GM12878 (cell line): ENCODE measurements at regions of chrX and their contacts with region 1.

Region 1: GRCh38 chrX:46642145-46642544 is 68.6 kb downstream of the CHST7 start:
- DNase-seq: no peak
- ATAC-seq: peak; percentile 69
- H3K4me3 ChIP-seq: no peak overlapping the region
- H3K27ac ChIP-seq: no peak overlapping the region
- H3K4me1 ChIP-seq: peaks cover 9% of the 10 kb centered on the region
- H3K27me3 ChIP-seq: no peaks in the 10 kb centered on the region
- CTCF ChIP-seq: peak; percentile 24 to 50 (median 39); a peak in 5 of 6 replicates
- EP300 ChIP-seq: no peak
- POLR2A ChIP-seq: no peak
- RAD21 ChIP-seq: peak; percentile 52; the same call in 1 of the 2 replicates

Region 2: GRCh38 chrX:46554942-46555341 is 87.2 kb before region 1 on chrX:
- CTCF ChIA-PET with region 1: interaction called, 9 read pairs
- POLR2A ChIA-PET with region 1: no interaction called
- RAD21 ChIA-PET with region 1: interaction called, 17 read pairs
- SMC1A ChIA-PET with region 1: interaction called, 11 read pairs
- in situ Hi-C with region 1: no loop called
- intact Hi-C with region 1: loop called (anchors 2 kb)
- DNase-seq: no peak
- ATAC-seq: peak; percentile 54
- H3K4me3 ChIP-seq: no peak overlapping the region
- H3K27ac ChIP-seq: no peak overlapping the region
- H3K4me1 ChIP-seq: no peaks in the 10 kb centered on the region
- H3K27me3 ChIP-seq: no peaks in the 10 kb centered on the region
- CTCF ChIP-seq: peak in 2 of 3 experiments; percentile 18 to 52; a peak in 2 of 6 replicates
- EP300 ChIP-seq: no peak
- POLR2A ChIP-seq: no peak
- RAD21 ChIP-seq: peak; percentile 55; the same call in 1 of the 2 replicates

Region 3: DNA sequence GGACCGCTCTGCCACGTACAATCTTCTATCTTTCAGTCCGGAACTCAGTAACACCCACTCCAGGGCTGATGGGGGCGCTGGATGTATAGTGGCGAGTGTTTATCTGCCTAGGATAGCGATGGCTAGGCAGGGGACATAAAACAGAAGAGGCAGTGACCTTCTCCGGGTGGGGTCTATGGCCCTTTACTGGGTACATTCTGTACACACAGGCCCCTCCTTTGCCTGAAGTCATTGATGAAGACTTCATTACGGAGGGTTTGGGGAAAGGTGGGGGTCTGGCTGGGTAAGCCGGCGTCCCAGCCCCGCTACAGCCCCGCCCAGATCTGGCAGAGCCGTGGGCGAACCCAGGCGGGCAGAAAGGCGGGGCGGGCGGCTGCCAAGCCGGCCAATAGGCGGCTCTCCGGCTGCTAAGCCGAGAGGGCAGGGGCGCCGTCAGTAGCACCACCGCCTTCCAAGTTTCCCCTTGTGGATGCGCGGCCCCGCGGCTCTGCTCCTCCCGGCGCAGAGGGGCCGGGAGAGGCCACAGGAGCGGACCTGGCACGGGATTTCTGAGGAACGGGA is 68.7 kb before region 1 on chrX and contains the start of gene CHST7:
- CTCF ChIA-PET with region 1: interaction called, 13 read pairs
- POLR2A ChIA-PET with region 1: interaction called, 3 read pairs
- RAD21 ChIA-PET with region 1: interaction called, 9 read pairs
- SMC1A ChIA-PET with region 1: interaction called, 11 read pairs
- in situ Hi-C with region 1: no loop called
- intact Hi-C with region 1: no loop called
- DNase-seq: no peak
- ATAC-seq: peak; percentile 65
- H3K4me3 ChIP-seq: peak within 1 kb of the TSS; percentile 69
- H3K27ac ChIP-seq: peak within 1 kb of the TSS; percentile 80
- H3K4me1 ChIP-seq: peaks cover 26% of the 10 kb centered on the region
- H3K27me3 ChIP-seq: no peaks in the 10 kb centered on the region
- CTCF ChIP-seq: peak in 2 of 3 experiments; percentile 25 to 42; a peak in 3 of 6 replicates
- EP300 ChIP-seq: no peak
- POLR2A ChIP-seq: no peak
- RAD21 ChIP-seq: peak; percentile 38
- polyA plus RNA-seq, gene CHST7: 0.58 to 1.7 TPM

Region 4: GRCh38 chrX:46628460-46629371 is 13.4 kb before region 1 on chrX:
- CTCF ChIA-PET with region 1: interaction called, 14 read pairs
- POLR2A ChIA-PET with region 1: interaction called, 8 read pairs
- RAD21 ChIA-PET with region 1: interaction called, 19 read pairs
- SMC1A ChIA-PET with region 1: interaction called, 33 read pairs
- in situ Hi-C with region 1: no loop called
- intact Hi-C with region 1: no loop called
- DNase-seq: peak; percentile 91
- ATAC-seq: peak; percentile 94
- H3K4me3 ChIP-seq: no peak overlapping the region
- H3K27ac ChIP-seq: peak overlapping the region; percentile 85
- H3K4me1 ChIP-seq: peaks cover 33% of the 10 kb centered on the region
- H3K27me3 ChIP-seq: no peaks in the 10 kb centered on the region
- CTCF ChIP-seq: no peak
- EP300 ChIP-seq: peak; percentile 72 to 81; a peak in 3 of 4 replicates
- POLR2A ChIP-seq: peak; percentile 52; the same call in 1 of the 2 replicates
- RAD21 ChIP-seq: 0 out of 2 replicates have a peak, but pooled peaks have one; percentile 11

Region 5: GRCh38 chrX:46686003-46686645 is 44.0 kb after region 1 on chrX:
- CTCF ChIA-PET with region 1: interaction called, 24 read pairs
- POLR2A ChIA-PET with region 1: no interaction called
- RAD21 ChIA-PET with region 1: no interaction called
- SMC1A ChIA-PET with region 1: interaction called, 14 read pairs
- in situ Hi-C with region 1: no loop called
- intact Hi-C with region 1: no loop called
- DNase-seq: no peak
- ATAC-seq: peak; percentile 87
- H3K4me3 ChIP-seq: no peak overlapping the region
- H3K27ac ChIP-seq: no peak overlapping the region
- H3K4me1 ChIP-seq: peaks cover 19% of the 10 kb centered on the region
- H3K27me3 ChIP-seq: no peaks in the 10 kb centered on the region
- CTCF ChIP-seq: peak; percentile 61 to 79 (median 63)
- EP300 ChIP-seq: no peak
- POLR2A ChIP-seq: no peak
- RAD21 ChIP-seq: peak; percentile 70

Region 6: DNA sequence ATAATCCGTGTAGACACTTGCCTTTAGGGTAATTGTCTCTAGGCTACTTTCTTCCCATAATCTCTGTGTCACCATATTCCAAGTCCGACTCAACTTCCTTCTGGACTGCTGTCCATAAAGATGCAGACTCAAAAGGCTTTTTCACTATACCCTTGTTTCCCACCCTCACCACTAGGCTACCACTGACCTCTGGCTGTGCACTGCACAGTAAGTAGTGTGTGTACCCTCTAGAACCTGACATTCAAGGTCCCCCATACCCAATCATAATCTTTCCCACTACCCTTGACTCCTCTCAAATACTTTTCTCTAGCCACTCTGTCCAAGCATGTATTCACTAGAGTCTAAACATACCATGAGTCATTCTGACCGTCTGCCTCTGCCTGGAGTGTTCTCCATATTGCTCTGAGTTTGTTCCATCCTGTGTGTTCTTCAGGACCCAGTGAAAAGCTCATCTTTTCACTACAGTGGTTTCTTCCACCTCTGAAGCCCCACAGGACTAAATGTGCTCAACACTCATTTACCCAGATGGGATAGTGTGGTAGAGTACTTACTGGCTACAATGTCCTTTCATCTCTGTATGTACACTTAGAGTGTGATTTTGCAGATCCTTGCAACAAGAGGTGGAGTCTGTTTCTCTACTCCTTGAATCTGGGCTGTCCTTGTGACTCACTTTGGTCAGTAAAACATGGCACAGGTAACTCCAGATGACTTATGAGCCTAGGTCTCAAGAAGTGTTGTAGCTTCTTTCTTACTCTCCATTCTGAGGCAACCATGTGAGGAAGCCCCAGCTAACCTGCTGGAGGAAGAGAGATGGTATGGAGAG is 287.5 kb after region 1 on chrX:
- CTCF ChIA-PET with region 1: no interaction called
- POLR2A ChIA-PET with region 1: no interaction called
- RAD21 ChIA-PET with region 1: no interaction called
- SMC1A ChIA-PET with region 1: no interaction called
- in situ Hi-C with region 1: no loop called
- intact Hi-C with region 1: no loop called
- DNase-seq: no peak
- ATAC-seq: no peak
- H3K4me3 ChIP-seq: no peak overlapping the region
- H3K27ac ChIP-seq: no peak overlapping the region
- H3K4me1 ChIP-seq: no peaks in the 10 kb centered on the region
- H3K27me3 ChIP-seq: peaks cover 0 to 2% of the 10 kb centered on the region in 2 experiments; a peak in 1 of 4 replicates
- CTCF ChIP-seq: no peak
- EP300 ChIP-seq: no peak
- POLR2A ChIP-seq: no peak
- RAD21 ChIP-seq: no peak